Sciatic nerve (tissue), 2 donors: ENCODE measurements at regions of chr15 and their contacts with region 1.

Region 1: DNA sequence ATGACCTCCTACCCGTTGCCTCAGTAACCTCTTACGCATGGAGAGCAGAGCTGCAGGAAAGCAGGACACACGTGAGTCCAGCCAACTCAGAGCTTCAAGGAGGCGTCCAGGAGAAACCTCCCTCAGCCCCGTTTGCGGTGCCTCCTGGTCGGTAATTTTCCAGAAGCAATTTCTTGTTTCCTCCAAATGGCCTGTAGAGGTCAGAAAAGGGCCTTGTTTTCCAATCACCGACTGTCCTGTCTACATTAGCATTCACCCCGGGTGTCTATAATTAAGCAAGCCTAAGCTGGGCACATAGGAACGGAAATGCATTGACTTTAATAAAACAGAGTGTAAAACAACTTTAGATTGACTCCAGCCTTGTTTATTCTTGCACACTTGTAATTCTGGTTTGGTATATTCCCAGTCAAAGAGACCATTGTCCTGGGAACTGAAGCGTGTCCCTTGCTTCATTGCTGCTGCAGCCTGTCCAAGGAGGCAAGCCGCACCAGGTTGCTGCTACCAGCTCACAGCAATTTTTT is 836.2 kb downstream of the AGBL1 start:
- DNase-seq: no peak
- ATAC-seq: peak; percentile 82

Region 2: GRCh38 chr15:86877171-86877646 is 38.7 kb before region 1 on chr15:
- intact Hi-C with region 1: no loop called
- DNase-seq: no peak
- ATAC-seq: peak; percentile 36

Region 3: DNA sequence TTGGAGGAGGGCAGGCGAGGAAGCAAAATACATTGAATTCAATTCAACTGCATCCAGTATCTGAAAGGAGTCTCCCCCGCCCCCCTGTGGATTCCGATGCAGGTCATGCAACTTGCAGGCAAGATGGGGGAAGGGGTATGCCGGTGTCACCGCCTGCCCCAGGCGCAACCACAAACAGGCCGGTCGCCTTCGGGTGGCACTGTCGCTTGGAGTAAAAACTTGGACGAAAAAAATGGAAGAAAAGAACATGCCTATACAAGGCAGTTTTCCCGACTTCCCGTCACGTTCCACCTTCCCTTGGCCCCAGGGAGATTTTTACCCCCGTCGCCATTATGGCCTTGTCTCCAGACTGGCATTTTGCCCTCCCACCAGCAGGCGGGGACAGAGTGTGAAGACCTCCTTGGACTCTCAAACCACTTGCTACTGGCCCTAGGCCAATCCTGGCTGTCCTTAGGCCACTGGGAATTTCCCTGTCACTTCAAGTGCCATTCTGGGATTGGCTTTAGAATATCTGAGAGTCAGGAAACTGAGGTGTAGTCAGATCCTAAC is 1342.3 kb after region 1 on chr15:
- intact Hi-C with region 1: loop called (anchors 10 kb)
- DNase-seq: peak; percentile 69
- ATAC-seq: peak; percentile 8